ENCODE measurements at regions of chr2 and their contacts with region 1.

Region 1: DNA sequence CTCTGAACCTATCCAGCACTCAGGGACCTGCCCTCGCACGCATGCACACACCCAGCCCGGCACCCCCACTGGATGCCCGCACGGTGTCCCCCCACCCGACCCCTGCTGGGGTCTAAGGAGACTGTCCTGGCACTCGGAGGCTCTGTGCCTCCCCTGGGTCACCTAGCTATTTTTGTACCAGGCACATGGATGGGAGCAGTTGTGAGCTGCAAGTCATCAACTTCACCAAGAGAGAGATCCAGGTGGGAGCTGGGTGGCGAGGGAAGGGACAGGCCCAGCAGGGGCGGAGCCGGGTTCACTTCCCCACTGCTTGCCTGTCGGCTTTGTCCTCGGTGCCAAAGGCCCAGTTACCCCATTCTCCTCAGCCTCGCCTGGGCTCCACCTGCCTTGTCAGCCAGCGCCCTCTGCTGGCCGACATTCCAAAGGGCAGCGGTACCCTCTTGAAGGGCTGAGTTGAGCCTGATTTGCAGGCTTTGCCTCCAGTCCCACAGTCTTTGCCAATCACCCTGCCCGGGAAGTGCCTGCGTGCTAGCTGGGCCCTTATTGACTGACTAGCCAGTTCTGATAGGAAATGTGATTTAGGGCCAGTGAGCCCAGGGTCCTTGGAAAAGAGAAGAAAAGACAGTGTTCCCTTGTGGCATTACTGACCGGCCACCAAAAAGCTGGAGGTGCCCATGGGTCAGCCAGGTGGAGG is 5.8 kb downstream of the NT5DC4 start:
- DNase-seq: peak; percentile 89 to 95 (median 92)
- ATAC-seq: peak; percentile 90
- H3K4me3 ChIP-seq: no peak overlapping the region
- H3K27ac ChIP-seq: no peak overlapping the region
- H3K4me1 ChIP-seq: peaks cover 31 to 72% of the 10 kb centered on the region in 2 experiments
- H3K27me3 ChIP-seq: no peaks in the 10 kb centered on the region
- CTCF ChIP-seq: peak; percentile 95 to 98 (median 97)
- EP300 ChIP-seq: no peak
- POLR2A ChIP-seq: no peak
- RAD21 ChIP-seq: peak; percentile 99 to 100

Region 2: GRCh38 chr2:112481050-112481527 is 245.6 kb before region 1 on chr2:
- CTCF ChIA-PET with region 1: interaction called, 3 read pairs
- POLR2A ChIA-PET with region 1: no interaction called
- in situ Hi-C with region 1: no loop called
- intact Hi-C with region 1: loop called (anchors 10 kb)
- DNase-seq: peak; percentile 79 to 94 (median 84)
- ATAC-seq: peak; percentile 89
- H3K4me3 ChIP-seq: peak overlapping the region; percentile 76
- H3K27ac ChIP-seq: peak overlapping the region; percentile 91
- H3K4me1 ChIP-seq: peaks cover 13 to 25% of the 10 kb centered on the region in 2 experiments; a peak in 4 of 5 replicates
- H3K27me3 ChIP-seq: no peaks in the 10 kb centered on the region; a peak in 1 of 5 replicates
- CTCF ChIP-seq: peak; percentile 87 to 96 (median 94)
- EP300 ChIP-seq: peak; percentile 36; the same call in 1 of the 2 replicates
- POLR2A ChIP-seq: peak; percentile 66
- RAD21 ChIP-seq: peak; percentile 79 to 88

Region 3: GRCh38 chr2:112601751-112602150 is 124.9 kb before region 1 on chr2:
- CTCF ChIA-PET with region 1: interaction called, 67 read pairs
- POLR2A ChIA-PET with region 1: no interaction called
- in situ Hi-C with region 1: loop called (anchors 5 kb)
- intact Hi-C with region 1: loop called (anchors 1 kb)
- DNase-seq: no peak
- ATAC-seq: no peak
- H3K4me3 ChIP-seq: no peak overlapping the region
- H3K27ac ChIP-seq: no peak overlapping the region
- H3K4me1 ChIP-seq: peaks cover 0 to 3% of the 10 kb centered on the region in 2 experiments; a peak in 2 of 5 replicates
- H3K27me3 ChIP-seq: no peaks in the 10 kb centered on the region
- CTCF ChIP-seq: no peak
- EP300 ChIP-seq: no peak
- POLR2A ChIP-seq: no peak
- RAD21 ChIP-seq: no peak

Region 4: GRCh38 chr2:112626604-112627059 is 100.0 kb before region 1 on chr2:
- CTCF ChIA-PET with region 1: interaction called, 48 read pairs
- POLR2A ChIA-PET with region 1: interaction called, 9 read pairs
- in situ Hi-C with region 1: loop called (anchors 5 kb)
- intact Hi-C with region 1: loop called (anchors 1 kb)
- DNase-seq: peak; percentile 52 to 78 (median 64)
- ATAC-seq: peak; percentile 88
- H3K4me3 ChIP-seq: no peak overlapping the region
- H3K27ac ChIP-seq: no peak overlapping the region
- H3K4me1 ChIP-seq: peaks cover 18 to 52% of the 10 kb centered on the region in 2 experiments
- H3K27me3 ChIP-seq: no peaks in the 10 kb centered on the region
- CTCF ChIP-seq: peak; percentile 90 to 91 (median 91)
- EP300 ChIP-seq: no peak
- POLR2A ChIP-seq: no peak
- RAD21 ChIP-seq: peak; percentile 97 to 99

Region 5: DNA sequence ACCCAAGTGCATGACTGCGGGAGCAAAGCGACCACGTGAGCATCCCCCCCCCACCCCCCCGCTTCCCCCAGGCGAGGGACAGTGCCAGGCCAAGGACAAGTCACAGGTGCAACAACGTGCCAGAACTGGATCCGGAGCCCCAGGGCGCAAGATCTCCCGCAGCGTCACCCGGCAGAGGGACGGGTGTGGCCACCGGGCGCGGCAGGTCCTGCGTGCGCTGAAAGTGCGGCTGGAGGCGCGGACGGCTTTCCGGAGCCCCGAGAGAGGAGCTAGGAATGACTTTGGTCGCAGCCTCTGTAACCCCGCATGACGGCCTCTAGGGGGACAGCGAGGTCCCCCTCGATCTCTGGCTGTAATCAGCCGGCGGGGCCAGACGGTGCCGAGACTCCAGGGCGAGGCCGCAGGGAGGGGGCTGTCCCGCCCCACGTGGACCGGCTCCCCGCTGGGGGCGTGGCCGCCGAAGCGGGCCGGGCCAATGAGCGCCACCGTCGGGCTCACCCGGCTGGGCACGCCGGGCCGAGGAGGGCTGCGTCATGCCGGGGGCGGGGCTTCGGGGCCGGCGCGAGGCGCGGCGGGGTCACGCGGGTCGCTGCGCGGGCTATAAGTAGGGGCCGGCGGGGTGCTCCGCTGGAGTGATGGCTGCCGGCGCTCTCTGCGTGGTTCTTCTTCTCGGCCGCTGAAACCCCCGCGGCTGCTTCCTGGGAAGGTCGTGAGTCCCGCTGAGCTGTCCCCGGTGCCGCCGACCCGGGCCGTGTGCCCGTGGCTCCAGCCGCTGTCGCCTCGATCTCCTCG is 81.1 kb before region 1 on chr2 and contains the start of gene SLC20A1:
- CTCF ChIA-PET with region 1: no interaction called
- POLR2A ChIA-PET with region 1: interaction called, 35 read pairs
- in situ Hi-C with region 1: no loop called
- intact Hi-C with region 1: no loop called
- DNase-seq: peak; percentile 98
- ATAC-seq: peak; percentile 94
- H3K4me3 ChIP-seq: peak within 1 kb of the TSS; percentile 94
- H3K27ac ChIP-seq: peak within 1 kb of the TSS; percentile 93
- H3K4me1 ChIP-seq: peaks cover 24 to 66% of the 10 kb centered on the region in 2 experiments
- H3K27me3 ChIP-seq: no peaks in the 10 kb centered on the region
- CTCF ChIP-seq: peak; percentile 74 to 81 (median 79)
- EP300 ChIP-seq: peak; percentile 10; the same call in 1 of the 2 replicates
- POLR2A ChIP-seq: peak; percentile 99
- RAD21 ChIP-seq: peak; percentile 67 to 69
- polyA plus RNA-seq, gene SLC20A1: 53.8 to 56.1 TPM

Region 6: GRCh38 chr2:112692496-112692911 is 34.1 kb before region 1 on chr2:
- CTCF ChIA-PET with region 1: no interaction called
- POLR2A ChIA-PET with region 1: no interaction called
- in situ Hi-C with region 1: no loop called
- intact Hi-C with region 1: loop called (anchors 2 kb)
- DNase-seq: peak; percentile 84 to 97 (median 87)
- ATAC-seq: peak; percentile 95
- H3K4me3 ChIP-seq: no peak overlapping the region
- H3K27ac ChIP-seq: peak overlapping the region; percentile 70
- H3K4me1 ChIP-seq: peaks cover 38 to 40% of the 10 kb centered on the region in 2 experiments
- H3K27me3 ChIP-seq: no peaks in the 10 kb centered on the region
- CTCF ChIP-seq: 0 out of 6 replicates have a peak, but pooled peaks of 1 of the 3 experiments have one; percentile 4
- EP300 ChIP-seq: peak; percentile 68
- POLR2A ChIP-seq: no peak
- RAD21 ChIP-seq: peak in 1 of 2 experiments; percentile 38; a peak in 2 of 4 replicates

Region 7: GRCh38 chr2:112941753-112942658 is 215.4 kb after region 1 on chr2:
- CTCF ChIA-PET with region 1: no interaction called
- POLR2A ChIA-PET with region 1: no interaction called
- in situ Hi-C with region 1: no loop called
- intact Hi-C with region 1: loop called (anchors 5 kb)
- DNase-seq: peak; percentile 60 to 88 (median 68)
- ATAC-seq: peak; percentile 99
- H3K4me3 ChIP-seq: no peak overlapping the region
- H3K27ac ChIP-seq: no peak overlapping the region
- H3K4me1 ChIP-seq: peaks cover 0 to 3% of the 10 kb centered on the region in 2 experiments; a peak in 2 of 5 replicates
- H3K27me3 ChIP-seq: peaks cover 0 to 6% of the 10 kb centered on the region in 2 experiments; a peak in 1 of 5 replicates
- CTCF ChIP-seq: peak; percentile 87 to 94 (median 92)
- EP300 ChIP-seq: no peak
- POLR2A ChIP-seq: no peak
- RAD21 ChIP-seq: peak; percentile 82 to 91

Measured in K562 (cell line).